ENCODE measurements at regions of chr6 and their contacts with region 1.

Region 1: GRCh38 chr6:98845211-98846020 is 11.0 kb downstream of the POU3F2 start:
- DNase-seq: peak; percentile 73
- ATAC-seq: peak; percentile 74 to 87
- H3K4me3 ChIP-seq: peak overlapping the region; percentile 32
- H3K27ac ChIP-seq: no peak overlapping the region
- H3K4me1 ChIP-seq: peaks cover 39% of the 10 kb centered on the region
- H3K27me3 ChIP-seq: peaks cover 98% of the 10 kb centered on the region
- CTCF ChIP-seq: peak; percentile 77

Region 2: GRCh38 chr6:98124171-98124570 is 721.2 kb before region 1 on chr6:
- intact Hi-C with region 1: loop called (anchors 10 kb)
- DNase-seq: no peak
- ATAC-seq: no peak
- H3K4me3 ChIP-seq: no peak overlapping the region
- H3K27ac ChIP-seq: no peak overlapping the region
- H3K4me1 ChIP-seq: no peaks in the 10 kb centered on the region
- H3K27me3 ChIP-seq: no peaks in the 10 kb centered on the region
- CTCF ChIP-seq: no peak

Region 3: GRCh38 chr6:98695091-98695801 is 150.2 kb before region 1 on chr6:
- intact Hi-C with region 1: no loop called
- DNase-seq: no peak
- ATAC-seq: no peak
- H3K4me3 ChIP-seq: no peak overlapping the region
- H3K27ac ChIP-seq: no peak overlapping the region
- H3K4me1 ChIP-seq: no peaks in the 10 kb centered on the region
- H3K27me3 ChIP-seq: no peaks in the 10 kb centered on the region
- CTCF ChIP-seq: no peak

Measured in lower lobe of right lung (tissue), 2 donors.